Activated naive CD4-positive, alpha-beta T cell treated with anti-CD3 and anti-CD28 coated beads, Interleukin-2, amount 10 ng/mL, durations not matched to agents 7 days and 5 days (primary cell): ENCODE measurements at regions of chr1 and their contacts with region 1.

Region 1: GRCh38 chr1:201042779-201043461 is 19.4 kb upstream of the KIF21B start:
- DNase-seq: peak; percentile 83
- H3K4me3 Mint-ChIP-seq: no peak overlapping the region
- H3K27ac Mint-ChIP-seq: no peak overlapping the region
- H3K4me1 Mint-ChIP-seq: peaks cover 2% of the 10 kb centered on the region
- H3K27me3 Mint-ChIP-seq: peaks cover 44% of the 10 kb centered on the region

Region 2: GRCh38 chr1:200992382-200993048 is 50.4 kb before region 1 on chr1:
- CTCF ChIA-PET with region 1: interaction called, 16 read pairs
- DNase-seq: no peak
- H3K4me3 Mint-ChIP-seq: no peak overlapping the region
- H3K27ac Mint-ChIP-seq: no peak overlapping the region
- H3K4me1 Mint-ChIP-seq: no peaks in the 10 kb centered on the region
- H3K27me3 Mint-ChIP-seq: no peaks in the 10 kb centered on the region

Region 3: GRCh38 chr1:201023517-201023902 is 19.4 kb before region 1 on chr1 and contains the start of gene KIF21B:
- CTCF ChIA-PET with region 1: interaction called, 57 read pairs
- DNase-seq: peak; percentile 94
- H3K4me3 Mint-ChIP-seq: peak within 1 kb of the TSS; percentile 89
- H3K27ac Mint-ChIP-seq: peak within 1 kb of the TSS; percentile 100
- H3K4me1 Mint-ChIP-seq: peaks cover 75% of the 10 kb centered on the region
- H3K27me3 Mint-ChIP-seq: peaks cover 3% of the 10 kb centered on the region

Region 4: GRCh38 chr1:201254625-201255506 is 211.9 kb after region 1 on chr1:
- CTCF ChIA-PET with region 1: no interaction called
- DNase-seq: peak; percentile 70
- H3K4me3 Mint-ChIP-seq: no peak overlapping the region
- H3K27ac Mint-ChIP-seq: no peak overlapping the region
- H3K4me1 Mint-ChIP-seq: peaks cover 2% of the 10 kb centered on the region
- H3K27me3 Mint-ChIP-seq: no peaks in the 10 kb centered on the region